OCI-LY7 (cell line): ENCODE measurements at regions of chr2 and their contacts with region 1.

Region 1: GRCh38 chr2:179031731-179032408 is 18.1 kb downstream of the CCDC141 start:
- DNase-seq: peak; percentile 75
- H3K4me3 ChIP-seq: peak overlapping the region; percentile 39
- H3K27ac ChIP-seq: peak overlapping the region; percentile 85
- H3K4me1 ChIP-seq: peaks cover 23% of the 10 kb centered on the region
- CTCF ChIP-seq: no peak

Region 2: GRCh38 chr2:178976351-178976750 is 55.5 kb before region 1 on chr2:
- CTCF ChIA-PET with region 1: no interaction called
- POLR2A ChIA-PET with region 1: no interaction called
- intact Hi-C with region 1: no loop called
- DNase-seq: no peak
- H3K4me3 ChIP-seq: no peak overlapping the region
- H3K27ac ChIP-seq: no peak overlapping the region
- H3K4me1 ChIP-seq: no peaks in the 10 kb centered on the region
- CTCF ChIP-seq: no peak

Region 3: DNA sequence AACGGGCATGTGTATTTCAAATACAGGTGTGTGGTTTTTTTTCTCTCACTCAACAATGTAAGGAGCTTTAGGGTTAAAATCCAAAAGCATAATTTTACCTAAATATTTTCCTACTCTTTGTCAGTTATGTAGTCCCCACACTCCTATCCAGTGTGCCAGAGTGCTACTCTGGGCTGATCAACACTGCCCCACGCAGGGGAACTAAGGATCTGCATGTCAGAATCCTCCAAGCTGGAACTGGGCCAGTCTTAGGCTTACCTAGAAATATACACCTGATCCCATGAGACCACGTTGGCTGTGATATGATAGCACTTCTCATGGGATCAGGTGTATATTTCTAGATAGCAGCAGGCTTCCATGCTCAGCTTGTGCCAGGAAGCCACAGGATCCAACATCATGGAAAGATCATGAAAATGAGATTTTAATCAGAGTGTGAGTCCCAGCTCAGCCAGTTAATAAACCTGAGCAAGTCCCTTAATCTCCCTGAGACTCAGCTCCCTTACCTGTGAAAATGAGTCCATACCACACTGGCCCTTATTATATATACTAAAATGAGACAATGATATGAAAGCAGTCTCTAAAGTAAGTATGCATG is 11.6 kb before region 1 on chr2:
- CTCF ChIA-PET with region 1: interaction called, 7 read pairs
- POLR2A ChIA-PET with region 1: interaction called, 37 read pairs
- intact Hi-C with region 1: loop called (anchors 1 kb)
- DNase-seq: peak; percentile 60
- H3K4me3 ChIP-seq: no peak overlapping the region
- H3K27ac ChIP-seq: peak overlapping the region; percentile 50
- H3K4me1 ChIP-seq: peaks cover 26% of the 10 kb centered on the region
- CTCF ChIP-seq: peak; percentile 81

Region 4: GRCh38 chr2:179044500-179044899 is 12.6 kb after region 1 on chr2:
- CTCF ChIA-PET with region 1: interaction called, 3 read pairs
- POLR2A ChIA-PET with region 1: interaction called, 26 read pairs
- intact Hi-C with region 1: loop called (anchors 1 kb)
- DNase-seq: peak; percentile 40
- H3K4me3 ChIP-seq: peak overlapping the region; percentile 29
- H3K27ac ChIP-seq: peak overlapping the region; percentile 18
- H3K4me1 ChIP-seq: peaks cover 48% of the 10 kb centered on the region
- CTCF ChIP-seq: no peak

Region 5: GRCh38 chr2:179049546-179050311 is 17.9 kb after region 1 on chr2 and contains the start of gene CCDC141:
- CTCF ChIA-PET with region 1: interaction called, 3 read pairs
- POLR2A ChIA-PET with region 1: interaction called, 26 read pairs
- intact Hi-C with region 1: no loop called
- DNase-seq: peak; percentile 24
- H3K4me3 ChIP-seq: no peak within 1 kb of the TSS
- H3K27ac ChIP-seq: no peak within 1 kb of the TSS
- H3K4me1 ChIP-seq: peaks cover 46% of the 10 kb centered on the region
- CTCF ChIP-seq: no peak
- total RNA-seq, gene CCDC141: 0.15 TPM in 1 of 2 replicates, not detected in the other

Region 6: DNA sequence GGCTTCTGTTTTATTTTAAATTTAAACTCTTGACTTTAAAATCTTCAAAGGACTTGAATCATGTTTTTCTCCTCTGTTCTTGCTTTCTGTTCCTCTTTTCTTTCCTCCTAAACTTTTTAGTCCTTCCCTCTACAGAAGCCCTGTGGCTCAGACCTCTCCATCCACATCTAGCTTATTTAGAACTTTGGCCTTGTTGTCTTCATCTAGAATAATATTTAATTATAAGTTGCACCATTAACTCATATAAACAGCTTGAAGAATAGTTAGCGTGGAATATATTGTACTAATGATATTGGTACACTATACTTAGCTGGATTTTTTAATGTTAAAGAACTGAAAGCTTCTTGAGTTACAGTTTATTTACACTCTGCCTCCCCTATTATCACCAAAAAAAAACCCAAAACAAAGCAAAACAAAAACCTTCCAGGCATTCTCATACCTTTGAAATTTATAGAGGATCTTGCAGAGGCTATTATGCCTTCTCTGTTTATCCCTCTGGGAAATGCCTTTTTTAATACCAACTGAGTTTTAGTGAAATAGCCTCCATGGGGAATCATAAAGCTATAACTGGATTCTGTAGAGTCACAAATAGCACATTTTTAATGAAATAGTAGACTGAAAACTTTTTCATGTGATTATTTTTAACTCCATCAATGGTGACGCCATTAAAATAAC is 27.3 kb after region 1 on chr2:
- CTCF ChIA-PET with region 1: no interaction called
- POLR2A ChIA-PET with region 1: interaction called, 12 read pairs
- intact Hi-C with region 1: loop called (anchors 2 kb)
- DNase-seq: peak; percentile 57
- H3K4me3 ChIP-seq: peak overlapping the region; percentile 14
- H3K27ac ChIP-seq: peak overlapping the region; percentile 77
- H3K4me1 ChIP-seq: peaks cover 21% of the 10 kb centered on the region
- CTCF ChIP-seq: no peak

Region 7: DNA sequence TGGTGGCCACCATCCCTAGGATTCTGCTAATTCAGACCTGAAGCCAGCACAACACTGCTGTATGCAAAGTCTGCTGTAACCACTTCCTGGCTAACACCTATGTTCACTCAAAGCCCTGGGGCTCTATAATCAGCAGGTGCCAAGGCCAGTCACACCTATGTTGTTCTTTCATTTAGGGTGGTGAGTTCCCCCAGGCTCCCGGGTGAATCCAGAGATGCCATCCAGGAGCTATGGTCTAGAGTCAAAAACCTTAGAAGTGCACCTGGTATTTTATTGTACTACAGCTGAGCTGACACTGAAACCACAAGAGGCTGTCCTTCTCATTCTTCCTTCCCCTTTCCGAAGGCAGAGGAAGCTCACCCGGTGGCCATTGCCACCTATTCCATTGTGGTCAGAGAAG is 64.2 kb after region 1 on chr2:
- CTCF ChIA-PET with region 1: no interaction called
- POLR2A ChIA-PET with region 1: interaction called, 3 read pairs
- intact Hi-C with region 1: loop called (anchors 5 kb)
- DNase-seq: peak; percentile 83
- H3K4me3 ChIP-seq: peak overlapping the region; percentile 12
- H3K27ac ChIP-seq: peak overlapping the region; percentile 56
- H3K4me1 ChIP-seq: peaks cover 46% of the 10 kb centered on the region
- CTCF ChIP-seq: no peak